Calu3 (cell line): ENCODE measurements at regions of chr5 and their contacts with region 1.

Region 1: GRCh38 chr5:51382763-51383490 is at the start of gene ISL1:
- DNase-seq: peak; percentile 88
- H3K4me3 Mint-ChIP-seq: peak within 1 kb of the TSS; percentile 91
- H3K27ac Mint-ChIP-seq: peak within 1 kb of the TSS; percentile 89
- H3K4me1 Mint-ChIP-seq: peaks cover 45% of the 10 kb centered on the region
- H3K27me3 Mint-ChIP-seq: no peaks in the 10 kb centered on the region
- CTCF ChIP-seq: no peak
- total RNA-seq, gene ISL1: 9.4 and 11.7 TPM in 2 replicates

Region 2: DNA sequence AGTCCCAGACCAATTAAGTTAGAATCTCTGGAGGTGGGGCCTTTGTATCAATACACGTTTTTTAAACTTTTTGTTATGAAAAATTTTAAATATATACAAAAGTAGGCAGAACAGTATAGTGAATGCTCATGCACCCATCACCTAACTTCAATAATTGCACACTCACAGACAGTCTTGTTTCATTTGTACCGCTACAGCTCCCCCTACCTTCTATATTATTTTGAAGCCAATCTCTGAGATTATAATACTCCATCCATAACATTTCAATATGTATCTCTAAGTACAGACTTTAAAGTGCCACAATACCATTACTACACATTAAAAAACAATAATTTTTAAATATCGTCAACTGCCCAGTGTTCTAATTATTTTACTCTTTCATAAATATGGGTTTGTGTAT is 33.2 kb after region 1 on chr5:
- CTCF ChIA-PET with region 1: no interaction called
- intact Hi-C with region 1: loop called (anchors 1 kb)
- DNase-seq: no peak
- H3K4me3 Mint-ChIP-seq: no peak overlapping the region
- H3K27ac Mint-ChIP-seq: no peak overlapping the region
- H3K4me1 Mint-ChIP-seq: peaks cover 14% of the 10 kb centered on the region
- H3K27me3 Mint-ChIP-seq: no peaks in the 10 kb centered on the region
- CTCF ChIP-seq: no peak

Region 3: DNA sequence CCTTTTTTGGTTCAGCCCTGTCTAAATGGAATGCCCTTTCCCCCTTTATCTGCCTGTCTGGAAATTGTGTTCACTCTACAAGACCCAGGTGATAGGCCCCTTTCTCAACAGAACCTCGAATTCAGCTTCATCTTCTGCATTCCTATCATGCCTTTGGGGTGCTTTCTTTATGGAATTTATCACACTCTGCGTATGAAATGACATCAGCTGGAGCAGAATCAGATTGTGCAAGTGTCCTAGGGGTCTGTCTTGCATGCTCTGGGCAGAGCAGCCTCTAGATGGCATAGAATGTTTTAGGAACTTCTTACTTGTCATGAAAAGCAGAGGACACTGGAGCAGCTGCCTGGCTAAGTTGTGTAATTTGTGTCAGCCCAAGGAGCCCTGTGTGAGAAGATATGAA is 85.3 kb after region 1 on chr5:
- CTCF ChIA-PET with region 1: interaction called, 5 read pairs
- intact Hi-C with region 1: loop called (anchors 2 kb)
- DNase-seq: no peak
- H3K4me3 Mint-ChIP-seq: no peak overlapping the region
- H3K27ac Mint-ChIP-seq: no peak overlapping the region
- H3K4me1 Mint-ChIP-seq: peaks cover 38% of the 10 kb centered on the region
- H3K27me3 Mint-ChIP-seq: no peaks in the 10 kb centered on the region
- CTCF ChIP-seq: no peak

Region 4: DNA sequence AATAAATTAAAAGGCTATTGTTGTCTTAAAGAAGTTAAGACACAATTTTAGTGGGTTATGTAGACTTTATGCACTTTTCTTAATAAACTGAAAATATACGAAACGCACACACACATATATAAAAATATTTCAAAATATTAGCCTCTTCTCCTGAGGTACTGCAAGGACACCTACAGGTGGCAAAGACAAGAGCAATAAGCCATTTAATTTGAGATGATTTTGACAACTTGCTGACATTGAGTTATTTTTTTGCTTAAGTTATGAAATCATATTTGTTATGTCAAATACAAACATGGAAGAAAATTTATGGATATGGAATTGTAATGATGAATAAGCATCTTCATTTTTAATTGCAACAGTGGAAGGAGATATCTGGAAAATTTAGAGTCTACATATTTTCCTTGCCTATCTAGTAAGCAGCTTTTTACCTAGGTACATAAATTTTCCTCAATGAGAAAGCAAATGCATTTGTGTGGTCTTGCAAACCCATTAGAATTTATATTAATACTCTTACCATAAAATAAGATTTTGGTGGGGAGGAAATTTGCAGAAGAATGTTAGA is 301.9 kb after region 1 on chr5:
- CTCF ChIA-PET with region 1: no interaction called
- intact Hi-C with region 1: loop called (anchors 2 kb)
- DNase-seq: no peak
- H3K4me3 Mint-ChIP-seq: no peak overlapping the region
- H3K27ac Mint-ChIP-seq: no peak overlapping the region
- H3K4me1 Mint-ChIP-seq: no peaks in the 10 kb centered on the region
- H3K27me3 Mint-ChIP-seq: no peaks in the 10 kb centered on the region
- CTCF ChIP-seq: peak; percentile 39

Region 5: GRCh38 chr5:51960617-51961115 is 577.7 kb after region 1 on chr5:
- CTCF ChIA-PET with region 1: no interaction called
- intact Hi-C with region 1: loop called (anchors 2 kb)
- DNase-seq: no peak
- H3K4me3 Mint-ChIP-seq: no peak overlapping the region
- H3K27ac Mint-ChIP-seq: no peak overlapping the region
- H3K4me1 Mint-ChIP-seq: no peaks in the 10 kb centered on the region
- H3K27me3 Mint-ChIP-seq: no peaks in the 10 kb centered on the region
- CTCF ChIP-seq: no peak